CD4-positive, alpha-beta memory T cell (primary cell): ENCODE measurements at regions of chr1 and their contacts with region 1.

Region 1: DNA sequence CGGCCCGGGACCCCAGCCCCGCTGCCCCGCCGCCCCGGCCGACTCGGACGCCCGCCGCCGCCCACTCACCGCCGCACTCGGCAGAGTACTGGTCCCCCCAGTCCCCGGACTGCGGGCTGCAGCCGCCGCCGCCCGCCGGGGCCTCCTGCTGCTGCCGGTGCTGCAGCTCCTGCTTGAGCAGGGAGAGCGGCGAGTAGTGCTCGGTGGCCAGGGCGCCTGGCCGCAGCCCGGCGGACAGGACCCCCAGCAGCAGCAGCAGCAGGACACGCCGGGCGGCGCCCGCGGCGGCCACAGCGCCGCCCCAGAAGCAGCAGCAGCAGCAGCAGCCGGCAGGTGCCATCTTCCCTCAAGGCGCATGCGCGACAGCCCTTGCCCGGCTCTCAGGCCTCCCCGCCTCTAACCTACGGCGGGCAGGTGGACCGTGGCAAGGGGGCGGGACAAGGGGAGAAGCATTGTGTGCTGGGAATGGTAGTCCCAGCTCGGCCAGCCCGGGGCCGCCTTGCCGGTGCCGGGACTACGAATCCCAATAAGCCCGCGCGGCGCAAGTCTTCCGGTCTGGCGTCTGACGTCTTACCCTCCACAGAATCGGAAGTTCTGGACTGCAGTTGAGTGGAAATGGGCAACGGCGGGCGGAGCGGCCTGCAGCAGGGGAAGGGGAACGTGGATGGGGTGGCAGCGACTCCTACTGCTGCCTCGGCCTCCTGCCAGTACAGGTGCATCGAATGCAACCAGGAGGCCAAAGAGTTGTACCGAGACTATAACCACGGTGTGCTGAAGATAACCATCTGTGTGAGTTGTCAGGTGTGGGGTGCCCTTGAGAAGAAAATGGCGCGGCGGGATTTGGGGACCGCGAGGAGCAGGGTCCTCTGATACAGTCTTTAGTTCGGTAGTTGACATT is at the starts of genes ARV1 and TTC13:
- DNase-seq: peak; percentile 95 to 97 (median 96)
- H3K4me3 ChIP-seq: peak within 1 kb of the TSS; percentile 66 to 86
- H3K4me3 Mint-ChIP-seq: peak within 1 kb of the TSS; percentile 94 to 100 (median 98)
- H3K27ac ChIP-seq: peak within 1 kb of the TSS; percentile 69
- H3K27ac Mint-ChIP-seq: peak within 1 kb of the TSS; percentile 92 to 100 (median 97)
- H3K4me1 ChIP-seq: peaks cover 59% of the 10 kb centered on the region
- H3K4me1 Mint-ChIP-seq: peaks cover 34 to 41% (median 38%) of the 10 kb centered on the region in 4 donors
- H3K27me3 ChIP-seq: no peaks in the 10 kb centered on the region
- H3K27me3 Mint-ChIP-seq: no peaks in the 10 kb centered on the region
- total RNA-seq, gene ARV1: 13.8 to 14.2 TPM
- total RNA-seq, gene TTC13: 43.9 to 54.5 TPM

Region 2: GRCh38 chr1:230487773-230488428 is 490.8 kb before region 1 on chr1:
- CTCF ChIA-PET with region 1: no interaction called
- POLR2A ChIA-PET with region 1: no interaction called
- intact Hi-C with region 1: no loop called
- DNase-seq: no peak
- H3K4me3 ChIP-seq: no peak overlapping the region
- H3K4me3 Mint-ChIP-seq: no peak overlapping the region
- H3K27ac ChIP-seq: no peak overlapping the region
- H3K27ac Mint-ChIP-seq: no peak overlapping the region
- H3K4me1 ChIP-seq: no peaks in the 10 kb centered on the region
- H3K4me1 Mint-ChIP-seq: no peaks in the 10 kb centered on the region
- H3K27me3 ChIP-seq: no peaks in the 10 kb centered on the region
- H3K27me3 Mint-ChIP-seq: peaks cover 6 to 13% of the 10 kb centered on the region in 2 donors

Region 3: DNA sequence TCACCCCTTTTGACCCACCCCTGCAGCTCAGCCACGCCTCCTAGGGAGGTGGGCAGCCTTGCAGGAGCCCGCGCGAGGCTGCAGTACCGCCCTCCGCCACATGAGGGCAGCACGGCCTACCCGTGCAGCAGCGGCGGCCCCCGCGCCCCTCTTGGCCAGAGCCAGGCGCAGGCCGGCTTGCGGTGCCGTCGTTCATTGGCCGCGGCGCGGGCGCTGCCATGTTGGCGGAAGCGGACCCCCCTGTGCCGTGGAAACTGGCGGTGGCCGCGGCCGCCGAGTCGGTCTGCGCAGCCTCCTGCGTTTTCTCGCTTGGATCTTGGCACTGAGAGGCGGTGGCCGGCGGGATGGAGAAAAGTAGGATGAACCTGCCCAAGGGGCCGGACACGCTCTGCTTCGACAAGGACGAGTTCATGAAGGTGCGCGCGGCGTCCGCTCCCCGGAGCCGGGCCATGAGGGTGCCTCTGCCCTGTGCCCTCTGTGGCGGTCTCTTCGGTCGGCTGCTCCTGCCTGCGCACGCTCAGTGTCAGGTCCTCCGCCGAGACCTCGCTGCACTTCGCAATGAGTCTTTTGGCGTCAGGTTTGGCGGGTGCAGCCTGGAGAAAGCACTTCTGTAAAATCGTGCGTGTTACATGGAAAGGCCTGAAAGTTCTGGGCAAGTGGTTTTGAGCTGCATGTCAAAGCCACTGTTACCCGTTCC is 336.3 kb before region 1 on chr1 and contains the start of gene COG2:
- CTCF ChIA-PET with region 1: interaction called, 5 read pairs
- POLR2A ChIA-PET with region 1: interaction called, 4 read pairs
- intact Hi-C with region 1: loop called (anchors 1 kb)
- DNase-seq: peak; percentile 87 to 96 (median 92)
- H3K4me3 ChIP-seq: peak within 1 kb of the TSS; percentile 71 to 85
- H3K4me3 Mint-ChIP-seq: peak within 1 kb of the TSS; percentile 93 to 100 (median 99)
- H3K27ac ChIP-seq: peak within 1 kb of the TSS; percentile 72
- H3K27ac Mint-ChIP-seq: peak within 1 kb of the TSS; percentile 77 to 98 (median 96)
- H3K4me1 ChIP-seq: peaks cover 44% of the 10 kb centered on the region
- H3K4me1 Mint-ChIP-seq: peaks cover 37 to 57% (median 47%) of the 10 kb centered on the region in 4 donors
- H3K27me3 ChIP-seq: no peaks in the 10 kb centered on the region
- H3K27me3 Mint-ChIP-seq: peaks cover 6 to 17% of the 10 kb centered on the region in 2 donors
- total RNA-seq, gene COG2: 41.5 to 44.6 TPM

Region 4: DNA sequence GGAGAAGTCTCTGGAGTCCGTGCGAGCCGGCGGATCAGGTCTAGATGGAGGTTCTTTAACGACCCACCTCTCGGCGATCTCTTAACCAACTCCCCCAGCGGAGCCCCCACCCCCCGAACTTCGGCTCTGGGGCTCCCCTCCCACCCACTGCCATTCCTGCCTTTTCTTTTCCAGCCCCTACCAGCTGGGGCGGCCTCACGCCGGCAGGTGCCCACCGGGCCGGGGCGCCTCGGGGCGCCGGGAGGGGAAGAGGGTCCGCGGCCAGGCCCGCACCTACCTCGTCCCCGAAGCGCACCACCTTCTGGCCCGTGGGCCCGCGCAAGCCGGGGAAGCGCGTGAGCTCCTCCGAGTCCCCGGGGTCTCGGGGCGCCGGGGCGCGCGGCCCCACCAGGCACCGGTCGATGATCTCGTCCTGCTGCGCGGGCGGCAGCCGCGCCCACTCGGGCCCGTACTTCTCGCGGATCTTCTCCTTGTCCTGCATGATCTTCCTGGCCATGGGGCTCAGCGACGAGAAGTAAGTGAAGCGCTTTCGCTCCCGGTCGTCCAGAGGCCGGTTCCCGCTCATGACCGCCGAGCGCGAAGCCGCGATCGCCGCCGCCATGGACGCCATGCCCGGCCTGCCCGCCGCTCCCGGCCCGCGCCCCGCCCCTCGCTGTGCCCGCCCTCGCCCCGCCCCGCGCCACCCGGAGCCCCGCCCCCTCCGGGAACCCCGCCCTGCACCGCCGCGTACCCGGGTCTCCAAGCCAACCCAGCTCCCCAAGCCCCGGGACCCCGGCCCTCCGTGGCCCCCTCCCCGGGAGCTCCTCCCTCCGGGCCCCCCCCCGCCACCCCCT is 110.6 kb before region 1 on chr1 and contains the start of gene C1orf198:
- CTCF ChIA-PET with region 1: no interaction called
- POLR2A ChIA-PET with region 1: no interaction called
- intact Hi-C with region 1: loop called (anchors 2 kb)
- DNase-seq: peak; percentile 61 to 77 (median 68)
- H3K4me3 ChIP-seq: peak within 1 kb of the TSS; percentile 45 to 75
- H3K4me3 Mint-ChIP-seq: peak within 1 kb of the TSS; percentile 87 to 95 (median 90)
- H3K27ac ChIP-seq: peak within 1 kb of the TSS; percentile 44
- H3K27ac Mint-ChIP-seq: peak within 1 kb of the TSS; percentile 43 to 84 (median 69)
- H3K4me1 ChIP-seq: peaks cover 15% of the 10 kb centered on the region
- H3K4me1 Mint-ChIP-seq: peaks cover 9 to 19% (median 14%) of the 10 kb centered on the region in 4 donors
- H3K27me3 ChIP-seq: peaks cover 14% of the 10 kb centered on the region
- H3K27me3 Mint-ChIP-seq: peaks cover 17 to 18% of the 10 kb centered on the region in 2 donors
- total RNA-seq, gene C1orf198: 4.2 to 4.4 TPM

Region 5: GRCh38 chr1:230922620-230923019 is 56.1 kb before region 1 on chr1:
- CTCF ChIA-PET with region 1: interaction called, 11 read pairs
- POLR2A ChIA-PET with region 1: interaction called, 3 read pairs
- intact Hi-C with region 1: loop called (anchors 1 kb)
- DNase-seq: no peak
- H3K4me3 ChIP-seq: no peak overlapping the region
- H3K4me3 Mint-ChIP-seq: no peak overlapping the region
- H3K27ac ChIP-seq: no peak overlapping the region
- H3K27ac Mint-ChIP-seq: peak overlapping the region in 2 of 7 donors; percentile 9 to 74
- H3K4me1 ChIP-seq: no peaks in the 10 kb centered on the region
- H3K4me1 Mint-ChIP-seq: no peaks in the 10 kb centered on the region
- H3K27me3 ChIP-seq: no peaks in the 10 kb centered on the region
- H3K27me3 Mint-ChIP-seq: no peaks in the 10 kb centered on the region

Region 6: DNA sequence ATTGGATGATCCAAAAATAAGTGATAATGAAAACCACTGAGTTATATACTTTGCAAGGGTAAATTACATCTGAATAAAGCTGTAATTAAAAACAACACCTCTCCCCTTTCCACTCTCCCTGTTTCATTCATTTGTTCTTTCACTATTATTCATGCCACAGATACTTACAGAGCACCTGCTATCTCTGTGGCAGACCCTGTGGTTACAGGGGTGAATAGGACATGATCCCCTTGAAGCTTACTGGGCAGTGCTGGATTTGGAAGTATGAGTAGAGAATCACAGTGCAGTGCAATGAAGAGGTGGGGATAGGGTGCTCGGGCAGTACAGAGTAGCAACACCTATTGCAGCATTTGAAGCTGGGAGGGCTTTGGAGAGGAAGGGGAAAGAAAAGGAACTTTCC is 21.9 kb after region 1 on chr1:
- CTCF ChIA-PET with region 1: no interaction called
- POLR2A ChIA-PET with region 1: no interaction called
- intact Hi-C with region 1: no loop called
- DNase-seq: no peak
- H3K4me3 ChIP-seq: no peak overlapping the region
- H3K4me3 Mint-ChIP-seq: no peak overlapping the region
- H3K27ac ChIP-seq: no peak overlapping the region
- H3K27ac Mint-ChIP-seq: no peak overlapping the region
- H3K4me1 ChIP-seq: no peaks in the 10 kb centered on the region
- H3K4me1 Mint-ChIP-seq: no peaks in the 10 kb centered on the region
- H3K27me3 ChIP-seq: no peaks in the 10 kb centered on the region
- H3K27me3 Mint-ChIP-seq: no peaks in the 10 kb centered on the region

Region 7: DNA sequence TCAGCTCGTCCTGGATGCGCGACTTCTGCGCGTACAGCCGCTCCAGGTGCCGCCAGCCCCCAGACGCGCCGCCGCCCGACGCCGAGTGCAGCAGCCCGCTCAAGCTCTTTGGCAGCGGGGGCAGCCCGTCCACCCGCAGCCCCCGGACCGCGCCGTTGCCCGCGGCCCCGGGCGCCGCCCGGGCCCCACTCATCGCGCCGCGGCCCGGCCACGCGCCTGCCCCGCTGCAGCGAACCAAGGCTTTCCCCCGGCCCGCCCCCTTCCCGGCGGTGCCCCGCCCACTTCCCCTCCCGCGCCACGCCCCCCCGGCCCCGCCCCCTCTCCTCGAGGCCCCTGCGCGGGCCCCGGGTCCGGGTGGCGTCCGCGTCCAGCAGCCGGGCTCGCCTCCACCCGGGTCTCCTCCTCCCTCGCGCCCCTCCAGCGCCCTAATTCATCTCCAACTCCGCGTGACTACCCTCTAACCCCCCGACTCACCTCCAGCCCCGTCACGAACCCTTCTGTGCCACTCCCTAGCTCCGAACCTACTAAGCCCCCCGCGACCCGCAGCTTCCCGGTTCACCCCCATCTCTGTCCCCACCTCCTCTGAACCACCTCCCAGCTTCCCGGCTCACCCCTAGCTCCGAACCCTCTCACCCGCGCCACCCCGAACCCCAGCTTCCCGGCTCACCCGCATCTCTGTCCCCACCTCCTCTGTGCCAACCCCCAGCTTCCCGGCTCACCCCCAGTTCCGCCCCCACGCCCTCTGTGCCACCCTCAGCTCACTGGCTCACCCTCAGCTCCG is 61.5 kb after region 1 on chr1 and contains the start of gene FAM89A:
- CTCF ChIA-PET with region 1: interaction called, 8 read pairs
- POLR2A ChIA-PET with region 1: interaction called, 7 read pairs
- intact Hi-C with region 1: loop called (anchors 1 kb)
- DNase-seq: peak; percentile 61 to 75 (median 69)
- H3K4me3 ChIP-seq: peak within 1 kb of the TSS; percentile 45 to 64
- H3K4me3 Mint-ChIP-seq: peak within 1 kb of the TSS; percentile 79 to 87 (median 84)
- H3K27ac ChIP-seq: peak within 1 kb of the TSS; percentile 46
- H3K27ac Mint-ChIP-seq: peak within 1 kb of the TSS; percentile 15 to 93 (median 72)
- H3K4me1 ChIP-seq: peaks cover 13% of the 10 kb centered on the region
- H3K4me1 Mint-ChIP-seq: peaks cover 18 to 41% (median 29%) of the 10 kb centered on the region in 4 donors
- H3K27me3 ChIP-seq: no peaks in the 10 kb centered on the region
- H3K27me3 Mint-ChIP-seq: no peaks in the 10 kb centered on the region
- total RNA-seq, gene FAM89A: 6.5 to 8.7 TPM

Region 8: DNA sequence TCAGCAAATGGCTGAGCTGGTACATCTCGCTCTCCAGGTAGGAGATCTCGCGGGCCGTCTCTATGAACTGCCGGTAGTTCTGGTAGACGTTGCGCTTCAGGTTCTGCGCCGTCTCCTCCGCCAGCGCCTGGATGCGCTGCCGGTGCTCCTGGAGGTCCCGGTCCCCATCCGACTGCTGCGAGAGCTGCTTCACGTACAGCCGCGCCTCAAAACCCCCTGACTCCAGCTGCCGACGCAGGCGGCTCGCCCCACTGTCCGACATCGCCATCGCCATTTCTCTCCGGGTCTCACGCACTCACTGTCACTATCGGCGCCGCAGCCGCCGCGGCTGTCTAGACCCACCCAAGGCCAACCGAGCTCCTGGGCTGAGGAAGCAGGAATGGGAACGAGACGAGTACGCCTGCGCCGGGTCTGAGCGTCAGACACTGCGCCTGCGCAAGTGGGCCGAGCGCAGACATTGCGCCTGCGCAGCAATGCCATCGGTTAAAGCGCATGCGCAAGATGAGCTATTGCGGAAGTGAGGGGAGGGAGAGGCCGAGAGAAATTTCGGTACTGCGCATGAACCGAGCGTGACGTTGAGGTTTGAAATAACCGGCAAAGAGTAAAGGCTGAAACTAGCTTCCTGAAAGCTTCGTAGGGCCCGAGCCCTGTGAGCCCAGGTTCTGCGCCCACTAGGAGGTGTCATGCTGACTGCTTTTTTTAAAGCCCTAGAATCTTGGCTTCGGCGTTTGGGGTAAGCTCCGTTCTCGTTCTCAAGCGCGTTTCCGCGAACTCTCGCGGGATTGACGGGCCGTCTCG is 358.9 kb after region 1 on chr1 and contains the start of gene EXOC8:
- CTCF ChIA-PET with region 1: no interaction called
- POLR2A ChIA-PET with region 1: interaction called, 4 read pairs
- intact Hi-C with region 1: loop called (anchors 2 kb)
- DNase-seq: peak; percentile 96 to 100 (median 99)
- H3K4me3 ChIP-seq: peak within 1 kb of the TSS; percentile 90 to 97
- H3K4me3 Mint-ChIP-seq: peak within 1 kb of the TSS; percentile 97 to 100 (median 99)
- H3K27ac ChIP-seq: peak within 1 kb of the TSS; percentile 98
- H3K27ac Mint-ChIP-seq: peak within 1 kb of the TSS; percentile 99 to 100 (median 100)
- H3K4me1 ChIP-seq: peaks cover 61% of the 10 kb centered on the region
- H3K4me1 Mint-ChIP-seq: peaks cover 42 to 75% (median 60%) of the 10 kb centered on the region in 4 donors
- H3K27me3 ChIP-seq: no peaks in the 10 kb centered on the region
- H3K27me3 Mint-ChIP-seq: no peaks in the 10 kb centered on the region
- total RNA-seq, gene EXOC8: 37.4 to 37.7 TPM

Region 9: GRCh38 chr1:231528172-231529029 is 549.7 kb after region 1 on chr1 and contains the start of gene TSNAX:
- CTCF ChIA-PET with region 1: no interaction called
- POLR2A ChIA-PET with region 1: no interaction called
- intact Hi-C with region 1: loop called (anchors 1 kb)
- DNase-seq: peak; percentile 87 to 94 (median 93)
- H3K4me3 ChIP-seq: peak within 1 kb of the TSS; percentile 59 to 86
- H3K4me3 Mint-ChIP-seq: peak within 1 kb of the TSS; percentile 96 to 98 (median 98)
- H3K27ac ChIP-seq: peak within 1 kb of the TSS; percentile 82
- H3K27ac Mint-ChIP-seq: peak within 1 kb of the TSS; percentile 99 to 100 (median 100)
- H3K4me1 ChIP-seq: peaks cover 52% of the 10 kb centered on the region
- H3K4me1 Mint-ChIP-seq: peaks cover 19 to 52% (median 36%) of the 10 kb centered on the region in 4 donors
- H3K27me3 ChIP-seq: no peaks in the 10 kb centered on the region
- H3K27me3 Mint-ChIP-seq: no peaks in the 10 kb centered on the region
- total RNA-seq, gene TSNAX: 43.5 to 50.7 TPM